ENCODE measurements at regions of chr16 and their contacts with region 1.

Region 1: GRCh38 chr16:15777533-15778203 is 79.2 kb downstream of the MYH11 start:
- DNase-seq: peak; percentile 74 to 79
- ATAC-seq: peak; percentile 92 to 97
- H3K4me3 ChIP-seq: no peak overlapping the region
- H3K27ac ChIP-seq: peak overlapping the region in 1 of 2 experiments; percentile 61; a peak in 3 of 6 replicates
- H3K4me1 ChIP-seq: no peaks in the 10 kb centered on the region
- CTCF ChIP-seq: peak; percentile 77
- EP300 ChIP-seq: no peak
- POLR2A ChIP-seq: no peak
- RAD21 ChIP-seq: peak; percentile 86 to 96

Region 2: GRCh38 chr16:15523092-15523541 is 254.6 kb before region 1 on chr16:
- CTCF ChIA-PET with region 1: no interaction called
- POLR2A ChIA-PET with region 1: no interaction called
- DNase-seq: peak in 1 of 2 experiments; percentile 71
- ATAC-seq: peak in 1 of 2 experiments; percentile 85; a peak in 3 of 6 replicates
- H3K4me3 ChIP-seq: no peak overlapping the region
- H3K27ac ChIP-seq: peak overlapping the region in 1 of 2 experiments; percentile 59; a peak in 2 of 6 replicates
- H3K4me1 ChIP-seq: peaks cover 40% of the 10 kb centered on the region
- CTCF ChIP-seq: 0 out of 3 replicates have a peak, but pooled peaks have one; percentile 23
- EP300 ChIP-seq: no peak
- POLR2A ChIP-seq: no peak
- RAD21 ChIP-seq: peak; percentile 50 to 70; a peak in 4 of 5 replicates

Region 3: GRCh38 chr16:15757630-15758251 is 19.9 kb before region 1 on chr16:
- CTCF ChIA-PET with region 1: interaction called, 10 read pairs
- POLR2A ChIA-PET with region 1: no interaction called
- DNase-seq: no peak
- ATAC-seq: no peak
- H3K4me3 ChIP-seq: no peak overlapping the region
- H3K27ac ChIP-seq: no peak overlapping the region
- H3K4me1 ChIP-seq: no peaks in the 10 kb centered on the region
- CTCF ChIP-seq: no peak
- EP300 ChIP-seq: no peak
- POLR2A ChIP-seq: no peak
- RAD21 ChIP-seq: no peak

Region 4: DNA sequence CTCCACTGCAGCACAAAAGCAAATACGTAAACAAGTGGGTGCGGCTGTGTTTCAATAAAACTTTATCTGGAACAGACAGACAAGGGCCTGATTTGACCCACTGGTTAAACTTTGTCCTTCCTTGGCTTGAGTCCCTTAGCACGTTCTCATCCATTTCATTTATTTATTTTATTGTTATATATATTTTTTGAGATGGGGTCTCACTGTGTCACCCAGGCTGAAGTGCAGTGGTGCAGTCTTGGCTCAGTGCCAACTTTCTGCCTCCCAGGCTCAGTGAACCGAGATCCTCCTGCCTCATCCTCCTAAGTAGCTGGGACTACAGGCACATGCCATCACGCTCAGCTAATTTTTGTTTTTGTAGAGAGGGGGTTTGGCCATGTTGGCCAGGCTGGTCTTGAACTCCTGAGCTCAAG is 14.9 kb after region 1 on chr16:
- CTCF ChIA-PET with region 1: interaction called, 22 read pairs
- POLR2A ChIA-PET with region 1: no interaction called
- DNase-seq: no peak
- ATAC-seq: no peak
- H3K4me3 ChIP-seq: no peak overlapping the region
- H3K27ac ChIP-seq: no peak overlapping the region
- H3K4me1 ChIP-seq: peaks cover 7% of the 10 kb centered on the region
- CTCF ChIP-seq: no peak
- EP300 ChIP-seq: no peak
- POLR2A ChIP-seq: no peak
- RAD21 ChIP-seq: no peak

Region 5: DNA sequence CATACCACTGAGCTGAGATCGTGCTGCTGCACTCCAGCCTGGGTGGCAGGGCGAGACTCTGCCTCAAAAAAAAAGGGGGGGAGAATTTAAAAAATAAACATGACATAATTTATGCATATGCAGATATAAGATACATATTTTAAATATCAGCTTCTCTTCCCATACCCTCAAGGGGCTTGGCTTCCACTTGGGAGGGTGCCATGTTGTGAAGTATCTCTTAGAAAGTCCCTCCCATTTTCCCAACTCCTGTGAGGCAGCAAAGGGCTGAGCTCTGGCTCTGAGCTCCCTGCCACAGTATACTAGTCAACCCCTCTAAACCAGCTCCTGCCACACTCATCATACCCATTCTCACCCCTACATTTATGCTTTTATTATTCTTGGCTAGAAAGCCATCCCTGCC is 39.8 kb after region 1 on chr16:
- CTCF ChIA-PET with region 1: interaction called, 36 read pairs
- POLR2A ChIA-PET with region 1: no interaction called
- DNase-seq: no peak
- ATAC-seq: no peak
- H3K4me3 ChIP-seq: no peak overlapping the region
- H3K27ac ChIP-seq: no peak overlapping the region
- H3K4me1 ChIP-seq: no peaks in the 10 kb centered on the region
- CTCF ChIP-seq: no peak
- EP300 ChIP-seq: no peak
- POLR2A ChIP-seq: no peak
- RAD21 ChIP-seq: no peak

Region 6: DNA sequence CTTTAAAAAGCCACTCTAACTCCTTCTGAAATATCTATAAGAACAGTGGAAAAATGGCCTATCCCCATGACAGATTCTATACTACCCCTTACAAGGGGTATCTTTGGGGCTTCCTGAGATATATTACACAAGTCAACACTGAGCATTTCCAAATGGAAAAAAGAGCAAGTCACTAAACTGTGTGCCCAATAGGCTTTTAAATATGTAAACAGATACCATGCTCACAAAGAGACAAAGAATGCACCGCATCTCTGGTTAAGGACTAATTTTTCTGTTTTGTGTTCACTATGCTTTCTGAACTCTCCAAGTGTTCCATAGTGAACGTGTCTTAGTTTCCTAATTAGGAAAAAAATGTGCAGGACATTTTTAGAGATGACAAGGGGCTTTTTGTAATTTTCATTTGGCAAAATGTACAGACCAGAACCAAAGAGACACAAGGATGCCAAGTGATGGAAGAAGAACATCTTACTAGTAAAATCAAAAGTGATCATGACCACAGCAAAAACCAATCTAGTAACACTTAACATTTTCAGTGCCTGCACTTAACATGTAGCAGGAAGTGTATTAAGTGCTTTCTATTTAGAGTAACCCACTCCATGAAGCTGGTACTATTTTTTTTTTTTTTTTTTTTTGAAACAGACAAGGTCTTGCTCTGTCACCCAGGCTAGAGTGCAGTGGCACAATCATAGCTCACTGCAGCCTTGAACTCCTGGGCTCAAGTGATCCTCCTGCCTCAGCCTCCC is 57.6 kb after region 1 on chr16:
- CTCF ChIA-PET with region 1: interaction called, 11 read pairs
- POLR2A ChIA-PET with region 1: no interaction called
- DNase-seq: no peak
- ATAC-seq: no peak
- H3K4me3 ChIP-seq: no peak overlapping the region
- H3K27ac ChIP-seq: no peak overlapping the region
- H3K4me1 ChIP-seq: no peaks in the 10 kb centered on the region
- CTCF ChIP-seq: no peak
- EP300 ChIP-seq: no peak
- POLR2A ChIP-seq: no peak
- RAD21 ChIP-seq: no peak

Region 7: DNA sequence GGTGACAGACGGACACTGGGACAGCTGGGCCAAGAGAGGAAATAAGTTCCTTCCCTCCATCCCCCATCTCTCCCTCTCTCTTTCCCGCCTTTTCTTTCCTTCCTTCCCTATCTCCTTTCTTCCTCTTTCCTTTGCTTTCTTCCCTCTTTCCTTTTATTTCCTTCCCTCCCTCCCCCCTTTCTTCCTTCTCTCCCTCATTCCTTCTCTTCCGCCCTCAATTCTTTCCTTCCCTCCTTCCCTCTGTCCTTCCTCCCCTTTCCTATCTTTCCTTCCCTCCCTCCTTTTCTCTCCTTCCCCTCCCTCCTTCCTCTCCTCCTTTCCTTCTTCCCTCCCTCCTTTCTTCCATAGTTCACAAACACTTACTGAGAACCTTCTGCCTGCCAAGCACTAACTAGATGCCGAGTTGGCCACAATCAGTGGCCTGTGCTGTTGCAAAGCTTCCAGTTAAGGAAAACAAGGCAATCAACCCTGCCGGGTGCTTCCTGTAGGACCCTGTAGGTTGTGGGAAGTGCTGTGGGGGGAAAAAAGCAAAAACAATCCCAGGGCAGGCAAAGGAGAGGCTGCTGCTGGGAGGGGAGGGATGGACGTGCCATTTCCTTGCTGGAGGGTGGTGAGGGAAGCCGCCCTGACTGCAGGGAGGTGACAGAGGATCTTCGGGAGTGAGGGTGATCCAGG is 414.0 kb after region 1 on chr16:
- CTCF ChIA-PET with region 1: interaction called, 16 read pairs
- POLR2A ChIA-PET with region 1: no interaction called
- DNase-seq: no peak
- ATAC-seq: no peak
- H3K4me3 ChIP-seq: no peak overlapping the region
- H3K27ac ChIP-seq: no peak overlapping the region
- H3K4me1 ChIP-seq: no peaks in the 10 kb centered on the region
- CTCF ChIP-seq: no peak
- EP300 ChIP-seq: no peak
- POLR2A ChIP-seq: no peak
- RAD21 ChIP-seq: no peak

Measured in A549 (cell line).